ENCODE measurements at regions of chr12 and their contacts with region 1.

Region 1: GRCh38 chr12:54279866-54280467 is at the start of gene CBX5:
- DNase-seq: peak; percentile 97

Region 2: DNA sequence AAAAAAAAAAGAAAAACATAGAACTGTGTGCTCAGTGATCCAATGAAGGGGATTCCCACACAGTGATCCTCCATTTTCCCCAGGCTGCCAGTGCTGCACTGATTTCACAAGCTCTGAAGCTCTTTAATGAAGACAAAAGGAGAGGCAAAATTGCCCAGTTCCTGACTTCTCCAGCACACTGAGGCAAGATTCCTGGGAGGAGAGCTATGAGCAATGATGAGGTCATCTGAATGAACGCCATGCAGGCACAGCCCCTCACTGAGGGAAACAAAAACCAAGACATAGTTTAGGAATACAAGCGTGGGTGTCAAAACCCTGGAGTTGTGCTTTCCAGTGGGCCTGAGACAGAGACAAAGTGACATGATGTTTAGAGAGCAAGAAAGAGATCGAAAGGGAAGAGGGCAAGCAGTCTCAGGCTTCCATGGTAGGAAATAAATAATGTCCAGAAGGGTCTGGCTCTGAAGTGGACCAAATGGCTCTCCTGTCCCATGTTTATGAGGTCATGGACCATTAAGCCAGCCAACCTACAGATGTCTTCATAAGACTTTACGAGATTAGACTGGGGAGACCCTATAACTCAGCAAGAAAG is 50.2 kb before region 1 on chr12:
- CTCF ChIA-PET with region 1: no interaction called
- POLR2A ChIA-PET with region 1: interaction called, 24 read pairs
- DNase-seq: no peak

Region 3: DNA sequence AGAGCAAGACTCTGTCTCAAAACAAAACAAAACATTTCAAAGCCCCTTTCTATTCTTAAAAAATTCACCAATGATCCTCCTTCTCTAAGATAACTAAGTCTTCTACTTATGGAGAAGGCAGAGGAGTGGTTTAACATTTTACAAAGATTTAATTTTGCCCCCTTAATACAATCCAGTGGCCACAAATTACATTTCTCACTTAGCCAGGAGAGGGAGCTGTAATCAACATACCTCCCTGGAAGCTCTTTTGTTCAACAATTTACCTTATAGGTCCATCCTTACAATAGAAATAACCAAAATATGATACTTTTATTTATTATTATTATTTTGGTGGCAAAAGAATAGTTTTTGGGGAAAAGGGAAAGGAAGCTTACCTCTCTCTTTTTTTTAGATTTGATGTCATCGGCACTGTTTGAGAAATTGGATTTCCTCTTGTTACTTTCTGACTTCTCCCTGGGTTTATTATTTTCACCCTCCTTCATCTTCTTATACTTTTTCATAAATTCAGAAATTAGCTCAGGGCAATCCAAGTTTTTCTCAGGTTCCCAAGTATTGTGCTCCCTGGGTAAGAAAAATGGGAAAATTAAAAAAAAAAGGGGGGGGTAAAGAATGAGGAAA is 28.2 kb before region 1 on chr12:
- CTCF ChIA-PET with region 1: interaction called, 3 read pairs
- POLR2A ChIA-PET with region 1: interaction called, 51 read pairs
- DNase-seq: peak; percentile 49

Region 4: DNA sequence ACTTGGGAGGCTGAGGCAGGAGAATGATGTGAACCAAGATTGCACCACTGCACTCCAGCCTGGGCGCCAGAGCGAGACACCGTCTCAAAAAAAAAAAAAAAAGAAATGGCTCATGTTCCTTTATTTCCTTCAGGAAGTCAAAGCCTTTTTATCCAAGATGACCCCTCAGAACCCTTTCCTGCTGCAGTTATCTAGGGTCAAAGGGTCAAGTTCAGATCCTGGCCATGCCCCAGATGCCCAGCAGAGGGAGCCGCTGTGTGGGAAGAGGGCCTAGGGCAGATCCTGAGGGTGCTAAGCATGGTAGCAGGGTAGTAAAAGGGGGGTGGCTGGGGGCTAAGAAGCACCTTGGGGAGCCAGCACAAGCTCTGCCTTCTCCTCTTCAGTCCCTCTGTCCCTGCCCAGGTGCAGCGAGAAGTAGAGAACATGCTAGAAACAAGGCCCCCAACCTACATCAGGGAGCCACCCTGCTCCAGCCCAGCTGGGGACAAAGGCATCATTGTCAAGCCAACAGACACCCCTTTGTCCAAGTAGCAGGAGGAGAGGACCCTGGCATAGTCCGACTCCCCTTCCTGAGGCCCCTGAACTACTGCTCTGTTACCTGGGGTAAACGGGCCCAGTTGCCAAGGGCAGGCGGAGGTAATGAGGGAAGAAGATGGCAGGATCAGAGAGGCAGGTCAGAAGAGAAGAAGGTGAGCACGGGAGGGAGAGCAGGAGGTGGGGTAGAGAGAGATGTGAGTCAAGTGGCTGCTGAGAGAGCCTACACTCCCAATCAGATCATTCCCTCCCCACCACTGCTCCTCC is 14.4 kb after region 1 on chr12:
- CTCF ChIA-PET with region 1: interaction called, 4 read pairs
- POLR2A ChIA-PET with region 1: interaction called, 79 read pairs
- DNase-seq: peak; percentile 66

Region 5: DNA sequence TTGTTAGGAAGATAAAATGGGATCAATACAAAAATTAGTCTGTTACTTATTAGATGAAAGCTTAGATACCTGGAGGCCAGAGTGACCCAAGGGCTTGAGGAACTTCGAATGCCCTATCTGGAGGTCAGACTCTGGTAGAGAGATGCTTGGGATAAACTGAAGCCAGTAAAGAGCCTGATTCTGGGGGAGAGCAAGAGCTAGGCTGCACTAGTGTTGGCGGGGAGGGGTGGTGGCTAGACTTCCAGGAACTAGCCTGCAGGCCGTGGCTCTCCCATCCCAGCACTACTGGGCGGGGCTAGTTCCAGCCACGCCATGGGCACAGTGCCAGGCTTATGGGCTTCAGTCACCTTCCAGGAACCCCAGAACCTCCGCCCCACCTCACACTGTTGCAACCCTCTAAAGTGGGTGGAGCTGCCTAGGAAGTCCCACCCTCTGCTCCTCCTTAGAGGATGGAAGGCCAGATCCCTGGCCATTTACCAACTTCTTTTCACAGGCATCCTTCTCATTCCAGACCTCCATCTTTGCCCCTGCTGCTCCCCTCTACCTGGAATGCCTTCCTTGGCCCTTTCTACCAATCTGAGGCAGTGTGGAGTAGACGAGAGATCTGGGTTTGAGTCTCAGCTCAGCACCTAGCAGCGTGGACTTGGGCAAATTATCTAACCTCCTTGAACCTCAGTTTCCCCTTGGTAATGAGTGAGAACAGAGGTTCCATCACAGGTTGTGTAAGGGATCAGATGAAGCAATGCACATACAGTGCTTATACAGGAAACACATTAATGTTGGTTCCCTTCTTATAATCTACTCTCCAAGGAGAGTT is 27.2 kb after region 1 on chr12:
- CTCF ChIA-PET with region 1: no interaction called
- POLR2A ChIA-PET with region 1: interaction called, 38 read pairs
- DNase-seq: no peak

Region 6: DNA sequence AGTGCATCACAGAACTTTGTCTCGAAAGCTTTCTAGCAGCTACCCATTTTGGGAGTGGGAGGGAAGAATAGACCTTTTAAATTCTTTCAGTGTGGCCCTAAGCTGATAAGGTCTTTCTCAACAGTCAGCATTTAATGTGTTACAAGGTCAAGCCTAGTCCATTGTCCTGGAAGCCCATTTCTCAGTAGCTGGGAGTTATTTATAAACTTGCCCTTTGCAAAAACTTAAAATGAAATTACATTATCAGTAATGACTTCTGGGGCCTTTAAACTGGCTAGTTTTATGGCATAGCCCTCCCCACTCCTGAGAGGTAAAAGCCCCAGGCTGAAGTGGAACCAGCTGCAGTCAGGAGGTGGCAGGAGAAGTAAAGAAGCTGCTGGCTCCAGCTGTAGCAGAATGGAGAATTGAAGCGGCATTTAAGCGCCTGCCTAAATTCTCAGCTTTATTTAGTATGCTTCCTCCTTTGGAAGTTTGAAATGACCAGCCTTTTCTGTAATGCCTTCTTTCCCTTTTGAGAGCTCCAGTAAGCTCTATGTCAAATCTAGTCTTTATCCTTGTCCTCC is 57.4 kb after region 1 on chr12:
- CTCF ChIA-PET with region 1: interaction called, 3 read pairs
- POLR2A ChIA-PET with region 1: interaction called, 14 read pairs
- DNase-seq: no peak

Region 7: GRCh38 chr12:54359033-54359761 is 79.2 kb after region 1 on chr12:
- CTCF ChIA-PET with region 1: no interaction called
- POLR2A ChIA-PET with region 1: interaction called, 53 read pairs
- DNase-seq: peak; percentile 92

Region 8: GRCh38 chr12:54662026-54662425 is 382.1 kb after region 1 on chr12:
- CTCF ChIA-PET with region 1: no interaction called
- POLR2A ChIA-PET with region 1: no interaction called
- DNase-seq: no peak